PC-3 (cell line): ENCODE measurements at regions of chr17 and their contacts with region 1.

Region 1: DNA sequence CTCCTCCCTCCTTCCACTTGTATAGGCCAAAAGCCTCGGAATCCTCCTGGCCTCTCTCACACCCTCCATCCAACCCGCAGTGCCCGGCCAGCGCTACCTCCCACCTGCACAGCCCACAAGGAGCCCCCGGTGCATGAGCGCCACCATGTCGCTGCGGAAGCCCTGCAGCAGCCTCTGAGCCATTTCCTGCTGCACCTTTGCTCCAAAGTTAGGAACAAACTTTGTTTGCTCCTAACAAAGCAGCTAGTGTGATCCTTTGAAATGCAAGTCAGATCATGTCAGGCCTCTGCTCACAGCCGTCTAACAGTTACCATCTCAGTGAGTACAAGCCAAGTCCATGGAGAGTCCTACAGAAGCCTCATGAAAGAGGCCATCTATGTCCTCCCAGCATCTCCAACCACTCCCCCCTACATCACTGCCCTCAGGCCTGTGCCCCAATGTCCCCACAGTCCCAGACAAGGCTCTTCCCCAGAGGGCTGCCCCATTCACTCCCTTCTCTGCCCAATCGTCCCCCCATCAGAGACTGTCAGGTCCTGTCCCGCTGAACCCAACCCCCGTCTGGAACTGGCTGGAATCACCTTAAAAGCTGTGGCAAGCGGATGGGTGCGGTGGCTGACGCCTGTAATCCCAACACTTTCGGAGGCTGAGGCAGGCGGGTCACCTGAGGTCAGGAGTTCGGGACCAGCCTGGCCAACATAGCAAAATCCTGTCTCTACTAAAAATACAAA is 7.5 kb downstream of the DCAKD start:
- DNase-seq: no peak
- ATAC-seq: no peak
- H3K4me3 ChIP-seq: no peak overlapping the region
- H3K27ac ChIP-seq: no peak overlapping the region
- H3K4me1 ChIP-seq: peaks cover 13% of the 10 kb centered on the region; the same call in 1 of the 2 replicates
- H3K27me3 ChIP-seq: no peaks in the 10 kb centered on the region
- CTCF ChIP-seq: no peak

Region 2: GRCh38 chr17:44878627-44879221 is 165.3 kb before region 1 on chr17:
- CTCF ChIA-PET with region 1: no interaction called
- POLR2A ChIA-PET with region 1: no interaction called
- intact Hi-C with region 1: no loop called
- DNase-seq: peak; percentile 65
- ATAC-seq: peak; percentile 62
- H3K4me3 ChIP-seq: no peak overlapping the region
- H3K27ac ChIP-seq: no peak overlapping the region
- H3K4me1 ChIP-seq: no peaks in the 10 kb centered on the region
- H3K27me3 ChIP-seq: no peaks in the 10 kb centered on the region
- CTCF ChIP-seq: peak; percentile 87

Region 3: DNA sequence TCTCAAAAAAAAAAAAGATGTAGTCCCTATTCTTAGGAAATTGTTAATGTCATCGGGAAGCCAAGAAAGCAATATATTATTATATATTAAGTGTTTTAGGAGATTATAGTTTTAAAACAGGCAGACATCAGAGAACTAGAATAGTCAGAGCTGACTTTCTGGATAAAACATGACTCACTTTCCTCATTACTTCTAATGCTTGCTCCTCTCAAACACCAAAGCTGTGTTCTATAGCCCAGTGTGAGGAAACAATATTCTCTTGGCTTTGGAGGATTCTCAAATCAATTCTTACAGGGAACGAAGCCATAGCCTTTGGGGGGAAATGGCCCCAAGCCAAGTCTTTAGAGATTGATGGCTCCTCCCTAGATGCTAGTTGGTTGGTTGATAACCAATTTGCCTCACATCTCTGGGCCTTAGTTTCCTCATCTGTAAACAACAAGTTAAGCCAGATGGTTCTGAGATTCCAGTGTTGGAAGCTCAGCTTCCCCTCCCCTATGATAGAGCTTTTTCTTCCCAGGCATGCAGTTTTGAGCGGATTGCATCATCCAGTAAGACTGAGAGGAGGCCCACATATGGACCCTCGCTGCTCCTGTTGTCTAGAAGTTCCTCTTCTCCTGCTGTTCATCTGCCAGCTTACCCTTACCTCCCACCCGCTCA is 29.6 kb after region 1 on chr17:
- CTCF ChIA-PET with region 1: no interaction called
- POLR2A ChIA-PET with region 1: interaction called, 11 read pairs
- intact Hi-C with region 1: no loop called
- DNase-seq: no peak
- ATAC-seq: no peak; the same call in 1 of the 2 replicates
- H3K4me3 ChIP-seq: no peak overlapping the region
- H3K27ac ChIP-seq: no peak overlapping the region
- H3K4me1 ChIP-seq: peaks cover 10% of the 10 kb centered on the region
- H3K27me3 ChIP-seq: no peaks in the 10 kb centered on the region
- CTCF ChIP-seq: no peak

Region 4: DNA sequence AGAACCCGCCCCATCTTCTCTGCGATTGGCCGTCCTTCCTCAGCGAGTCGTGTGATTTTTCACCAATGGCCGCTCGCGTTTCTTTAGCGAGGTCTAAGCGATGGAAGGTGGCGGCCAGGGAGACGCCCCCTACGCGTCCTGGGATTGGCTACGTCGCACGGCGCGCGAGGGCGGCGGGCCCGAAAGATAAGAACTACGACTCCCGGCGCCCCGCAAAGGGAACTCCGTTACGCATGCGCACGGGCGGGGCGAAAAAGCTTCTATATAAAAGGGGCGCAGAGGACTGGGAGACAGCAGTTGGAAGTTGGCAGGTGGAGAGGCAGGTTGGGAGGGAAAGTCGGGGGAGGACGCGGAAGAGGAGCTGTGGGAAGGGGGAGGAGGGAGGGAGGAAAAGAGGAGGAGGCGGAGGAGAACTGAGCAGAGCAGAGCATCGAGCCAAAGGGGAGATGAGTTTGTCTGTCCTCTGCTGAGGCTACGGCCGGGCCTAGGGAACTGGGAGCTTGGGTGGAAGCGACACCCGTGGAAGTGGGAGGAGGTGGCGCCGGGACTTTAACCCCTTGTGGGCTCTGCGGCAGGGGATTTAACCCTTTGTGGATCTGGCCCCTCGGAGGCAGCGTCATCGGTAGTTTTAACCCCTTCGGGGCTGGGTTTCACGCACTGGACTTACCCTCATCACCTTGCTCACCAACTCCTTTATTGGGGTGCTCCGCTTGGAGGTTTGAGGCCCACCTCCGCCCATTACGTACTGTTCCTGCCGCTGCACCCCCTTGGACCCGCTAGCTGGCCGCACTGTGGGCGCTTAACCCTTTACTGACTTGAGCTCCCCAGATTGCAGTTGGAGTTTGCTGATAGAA is 104.4 kb after region 1 on chr17 and contains the start of gene HEXIM1:
- CTCF ChIA-PET with region 1: no interaction called
- POLR2A ChIA-PET with region 1: no interaction called
- intact Hi-C with region 1: no loop called
- DNase-seq: peak; percentile 100
- ATAC-seq: peak; percentile 72
- H3K4me3 ChIP-seq: peak within 1 kb of the TSS; percentile 91
- H3K27ac ChIP-seq: peak within 1 kb of the TSS; percentile 90
- H3K4me1 ChIP-seq: peaks cover 27% of the 10 kb centered on the region
- H3K27me3 ChIP-seq: no peaks in the 10 kb centered on the region
- CTCF ChIP-seq: no peak
- total RNA-seq, gene HEXIM1: 47.3 and 59.0 TPM in 2 replicates